PC-9 (cell line): ENCODE measurements at regions of chr2 and their contacts with region 1.

Region 1: GRCh38 chr2:11932048-11932512 is 185.6 kb downstream of the LPIN1 start:
- DNase-seq: no peak
- H3K4me3 ChIP-seq: no peak overlapping the region
- H3K27ac ChIP-seq: no peak overlapping the region
- H3K4me1 ChIP-seq: no peaks in the 10 kb centered on the region
- H3K27me3 ChIP-seq: no peaks in the 10 kb centered on the region
- CTCF ChIP-seq: no peak

Region 2: DNA sequence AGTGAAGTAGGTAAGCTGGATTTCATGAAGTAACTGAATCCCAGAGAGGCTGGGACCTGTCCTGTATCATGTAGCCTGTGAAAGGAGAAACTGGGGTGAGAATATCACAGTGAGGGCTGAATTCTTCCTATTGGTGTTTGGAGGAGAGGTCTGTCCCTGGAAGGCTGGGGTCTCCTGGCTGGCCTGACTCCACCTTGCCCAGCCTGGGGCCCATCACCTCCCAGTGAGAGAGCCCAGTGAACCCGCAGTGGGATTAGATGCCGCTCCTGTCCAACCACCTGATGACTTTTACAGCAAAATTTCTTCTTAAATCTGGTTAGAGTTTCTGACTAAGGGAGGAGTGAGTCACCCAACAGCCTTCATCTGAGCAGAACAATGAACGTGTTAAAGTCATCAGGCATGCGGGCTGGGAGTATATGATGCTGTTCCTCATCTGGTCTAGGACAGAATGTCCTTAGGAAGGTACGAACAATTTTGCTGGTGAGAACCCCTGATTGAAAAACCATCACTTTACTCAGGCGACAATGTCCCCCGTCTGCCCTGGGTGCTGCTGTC is 32.7 kb before region 1 on chr2:
- CTCF ChIA-PET with region 1: no interaction called
- POLR2A ChIA-PET with region 1: no interaction called
- intact Hi-C with region 1: loop called (anchors 1 kb)
- DNase-seq: peak in 1 of 2 experiments; percentile 42
- H3K4me3 ChIP-seq: no peak overlapping the region
- H3K27ac ChIP-seq: no peak overlapping the region
- H3K4me1 ChIP-seq: no peaks in the 10 kb centered on the region
- H3K27me3 ChIP-seq: no peaks in the 10 kb centered on the region
- CTCF ChIP-seq: no peak

Region 3: DNA sequence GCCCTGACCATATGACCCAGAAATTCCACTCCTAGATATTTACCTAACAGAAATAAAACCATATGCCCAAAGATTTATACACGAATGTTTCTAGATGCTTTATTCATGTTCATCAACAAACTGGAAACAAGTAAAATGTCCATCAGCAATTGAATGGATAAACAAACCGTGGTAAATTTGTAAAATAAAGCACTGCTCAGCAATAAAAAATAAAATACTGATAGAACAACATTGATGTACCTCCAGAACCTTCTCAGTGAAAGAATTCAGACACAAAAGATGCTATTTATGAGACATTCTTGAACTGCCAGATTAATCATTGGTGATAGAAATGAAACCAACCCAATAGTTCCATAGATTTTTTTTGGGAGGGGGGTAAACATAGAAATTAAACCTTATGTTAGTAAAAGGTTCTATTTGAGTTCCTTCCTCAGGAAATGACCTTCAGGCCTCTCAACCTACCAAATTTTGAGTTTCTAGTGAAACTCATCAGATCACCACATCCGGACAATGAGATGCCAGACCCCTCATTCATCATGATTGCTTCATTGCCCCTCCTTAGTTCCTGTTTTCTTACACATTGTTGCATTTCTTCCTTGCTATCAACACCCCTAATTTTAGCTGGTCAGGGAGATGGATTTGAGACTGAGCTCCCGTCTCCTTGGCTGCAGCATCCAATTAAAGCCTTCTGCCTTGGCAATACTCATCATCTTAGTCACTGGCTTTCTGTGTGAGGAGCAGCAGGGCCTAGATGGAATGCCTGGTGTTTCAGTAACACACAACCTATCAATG is 17.8 kb after region 1 on chr2:
- CTCF ChIA-PET with region 1: no interaction called
- POLR2A ChIA-PET with region 1: no interaction called
- intact Hi-C with region 1: no loop called
- DNase-seq: no peak
- H3K4me3 ChIP-seq: no peak overlapping the region
- H3K27ac ChIP-seq: no peak overlapping the region
- H3K4me1 ChIP-seq: peaks cover 5% of the 10 kb centered on the region
- H3K27me3 ChIP-seq: no peaks in the 10 kb centered on the region
- CTCF ChIP-seq: no peak